AG04450 (cell line): ENCODE measurements at regions of chr14 and their contacts with region 1.

Region 1: DNA sequence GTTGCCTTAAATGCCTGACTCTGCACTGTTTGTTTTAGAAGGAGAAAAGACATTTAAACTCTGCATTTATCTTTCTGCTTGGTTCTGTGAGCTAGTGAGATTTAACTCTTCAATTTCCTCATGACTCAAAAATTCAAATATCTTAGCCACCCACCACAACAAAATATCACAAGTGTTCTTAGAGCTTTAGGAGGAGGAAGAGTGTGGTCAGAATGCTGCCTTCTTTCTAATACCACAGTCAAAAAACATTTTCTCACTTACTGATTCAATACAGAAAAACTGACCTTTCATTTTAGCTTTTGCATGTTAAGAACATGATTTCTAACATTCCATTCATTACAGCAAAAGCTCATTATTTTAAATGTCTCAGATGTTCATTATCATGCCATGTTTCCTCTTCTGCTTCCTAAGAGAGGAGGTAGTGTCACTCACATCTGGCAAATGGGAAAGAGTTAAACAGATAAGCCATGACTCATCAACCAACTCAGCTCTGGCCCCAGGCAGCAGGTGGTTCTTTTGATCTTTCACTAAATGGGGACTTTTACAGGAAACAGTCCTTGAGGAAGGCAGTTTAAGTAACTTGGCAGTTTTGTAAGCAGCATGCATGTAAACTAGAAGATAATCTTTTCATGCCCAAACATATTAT is 56.4 kb upstream of the RNU6-8 start:
- DNase-seq: peak; percentile 24
- H3K4me3 ChIP-seq: no peak overlapping the region
- H3K27ac ChIP-seq: no peak overlapping the region
- H3K27me3 ChIP-seq: peaks cover 8% of the 10 kb centered on the region
- CTCF ChIP-seq: no peak

Region 2: DNA sequence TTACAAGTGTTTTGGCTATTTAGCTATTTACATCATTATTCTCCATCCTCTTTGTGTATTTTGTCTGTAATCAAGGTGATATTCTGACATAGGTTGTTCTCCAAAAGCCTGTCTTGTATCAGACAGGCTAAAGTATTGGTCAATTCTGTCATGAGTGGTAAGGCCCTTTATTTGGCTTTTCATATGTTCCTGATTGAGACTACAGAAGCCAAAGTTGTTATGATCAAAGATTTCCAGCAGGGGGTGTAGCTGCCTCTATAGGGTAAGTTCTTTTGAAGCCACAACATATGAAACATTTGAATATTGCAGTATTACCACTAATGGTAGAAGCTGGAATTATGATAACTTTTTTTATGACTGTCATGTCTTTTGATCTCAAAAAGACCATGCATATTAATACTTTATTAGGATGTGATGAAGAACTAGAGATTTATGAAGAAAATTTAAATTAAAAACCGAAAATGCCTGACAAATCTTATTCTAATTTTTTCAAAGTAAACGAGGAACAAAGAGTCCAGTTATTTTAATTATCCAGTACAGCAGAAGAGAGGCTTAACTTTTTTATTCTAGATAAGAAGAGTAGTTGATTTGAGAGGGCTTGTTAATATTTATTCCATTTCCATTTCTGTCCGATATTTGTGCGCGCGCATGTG is 185.8 kb before region 1 on chr14:
- CTCF ChIA-PET with region 1: interaction called, 93 read pairs
- POLR2A ChIA-PET with region 1: interaction called, 5 read pairs
- DNase-seq: peak; percentile 48
- H3K4me3 ChIP-seq: no peak overlapping the region
- H3K27ac ChIP-seq: no peak overlapping the region
- H3K27me3 ChIP-seq: no peaks in the 10 kb centered on the region
- CTCF ChIP-seq: peak; percentile 85

Region 3: DNA sequence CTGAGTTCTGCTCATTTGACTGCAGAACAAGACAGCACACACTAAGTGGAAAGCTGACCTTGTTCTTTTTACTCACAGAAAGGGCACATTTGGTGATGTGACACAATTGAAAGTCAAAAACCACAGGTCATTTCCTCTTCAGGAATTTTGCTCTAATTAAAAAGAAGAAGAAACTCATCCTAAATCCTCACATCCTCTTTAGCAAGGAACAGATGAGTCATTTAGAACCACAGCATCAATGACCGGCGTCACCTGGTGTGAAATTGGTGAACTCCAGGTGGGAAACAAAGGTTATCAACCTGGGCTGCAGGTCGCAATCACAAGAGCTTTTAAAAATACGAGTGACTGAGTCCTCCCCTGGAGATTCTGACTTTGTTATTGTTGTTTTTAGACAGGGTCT is 53.5 kb before region 1 on chr14:
- CTCF ChIA-PET with region 1: no interaction called
- POLR2A ChIA-PET with region 1: no interaction called
- DNase-seq: no peak
- H3K4me3 ChIP-seq: no peak overlapping the region
- H3K27ac ChIP-seq: no peak overlapping the region
- H3K27me3 ChIP-seq: peaks cover 4% of the 10 kb centered on the region
- CTCF ChIP-seq: no peak

Region 4: DNA sequence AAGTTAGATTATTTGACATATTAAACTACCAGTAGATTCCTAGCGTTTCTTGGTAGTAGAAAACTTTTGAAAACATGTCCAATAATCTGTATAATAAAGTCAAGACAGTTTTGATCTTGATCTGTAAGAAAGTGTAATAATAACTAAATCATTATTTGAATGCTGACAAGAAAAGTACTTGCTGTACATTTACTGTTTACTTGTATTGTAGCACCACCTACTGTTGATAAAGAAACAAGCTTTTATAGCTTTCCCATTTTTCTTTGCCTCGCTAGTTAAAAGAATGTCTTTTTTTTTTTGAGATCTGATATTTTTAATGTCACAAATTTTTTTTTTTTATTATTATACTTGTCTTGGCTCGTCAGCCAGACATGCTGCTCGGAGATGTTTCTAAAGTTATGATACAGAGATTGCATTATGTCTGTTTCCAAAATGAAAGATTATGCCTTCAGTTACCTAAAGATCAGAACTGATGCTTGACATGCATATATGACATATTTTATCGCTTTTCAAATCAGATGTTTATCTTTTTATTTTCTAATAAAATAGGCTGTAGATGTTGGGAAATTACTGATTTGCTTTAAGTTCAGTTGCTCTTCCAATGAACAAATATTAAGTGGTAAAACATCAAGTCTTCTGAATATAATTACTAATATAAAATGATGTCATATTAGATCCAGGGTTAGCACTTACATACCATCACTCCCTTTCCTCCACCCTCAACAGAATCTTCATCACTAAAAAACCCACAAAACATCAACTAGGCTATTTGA is 210.1 kb after region 1 on chr14:
- CTCF ChIA-PET with region 1: interaction called, 36 read pairs
- POLR2A ChIA-PET with region 1: interaction called, 7 read pairs
- DNase-seq: no peak
- H3K4me3 ChIP-seq: no peak overlapping the region
- H3K27ac ChIP-seq: no peak overlapping the region
- H3K27me3 ChIP-seq: no peaks in the 10 kb centered on the region
- CTCF ChIP-seq: peak; percentile 54